ENCODE measurements at regions of chr9 and their contacts with region 1.

Region 1: GRCh38 chr9:95048225-95049087 is 269.1 kb downstream of the FANCC start:
- DNase-seq: peak; percentile 14
- H3K4me3 Mint-ChIP-seq: peak overlapping the region; percentile 68
- H3K27ac Mint-ChIP-seq: peak overlapping the region; percentile 48
- H3K4me1 Mint-ChIP-seq: peaks cover 8% of the 10 kb centered on the region
- H3K27me3 Mint-ChIP-seq: peaks cover 35% of the 10 kb centered on the region

Region 2: GRCh38 chr9:94672811-94673487 is 375.5 kb before region 1 on chr9:
- intact Hi-C with region 1: loop called (anchors 2 kb)
- DNase-seq: no peak
- H3K4me3 Mint-ChIP-seq: no peak overlapping the region
- H3K27ac Mint-ChIP-seq: no peak overlapping the region
- H3K4me1 Mint-ChIP-seq: peaks cover 11% of the 10 kb centered on the region
- H3K27me3 Mint-ChIP-seq: peaks cover 12% of the 10 kb centered on the region

Region 3: GRCh38 chr9:95010431-95010838 is 38.0 kb before region 1 on chr9:
- intact Hi-C with region 1: loop called (anchors 2 kb)
- DNase-seq: no peak
- H3K4me3 Mint-ChIP-seq: no peak overlapping the region
- H3K27ac Mint-ChIP-seq: no peak overlapping the region
- H3K4me1 Mint-ChIP-seq: peaks cover 35% of the 10 kb centered on the region
- H3K27me3 Mint-ChIP-seq: peaks cover 12% of the 10 kb centered on the region

Region 4: DNA sequence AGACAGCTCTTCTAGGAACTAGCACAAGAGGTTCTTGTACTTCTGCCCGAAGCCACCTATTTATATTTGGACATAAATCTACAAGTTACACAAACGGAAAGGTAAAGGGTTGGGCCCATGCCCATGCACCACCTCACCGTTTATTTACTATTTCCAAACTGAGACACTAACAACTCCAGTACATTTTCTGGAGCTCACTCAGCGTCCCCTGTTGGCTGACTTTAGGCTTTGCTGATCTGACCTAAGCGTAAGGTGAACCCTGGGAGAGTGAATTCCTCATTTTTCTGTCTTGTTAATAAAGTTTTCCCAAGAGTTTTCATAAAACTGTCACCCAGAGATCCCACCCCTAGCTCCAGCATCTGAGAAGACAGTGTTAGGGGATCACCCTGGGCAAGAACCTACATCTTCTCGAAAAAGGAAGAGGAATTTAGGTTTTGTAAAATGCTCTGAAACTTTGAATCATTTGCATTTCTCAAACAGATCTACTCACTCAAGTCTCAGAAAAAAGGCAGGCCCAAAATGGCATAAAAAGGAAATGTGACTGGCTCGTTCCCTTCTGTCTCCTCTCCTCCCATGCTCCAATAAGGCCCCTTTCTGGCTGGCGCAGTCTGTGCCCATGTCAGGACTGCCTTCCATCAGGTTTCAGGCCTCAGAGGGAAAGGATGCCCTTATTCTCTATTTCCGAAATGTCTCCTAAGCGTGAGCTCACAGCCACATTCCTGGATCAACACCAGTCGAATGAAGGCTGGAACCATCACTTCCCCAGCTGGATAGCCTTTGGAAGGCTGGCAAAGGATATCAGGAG is 67.7 kb after region 1 on chr9:
- intact Hi-C with region 1: no loop called
- DNase-seq: no peak
- H3K4me3 Mint-ChIP-seq: no peak overlapping the region
- H3K27ac Mint-ChIP-seq: no peak overlapping the region
- H3K4me1 Mint-ChIP-seq: no peaks in the 10 kb centered on the region
- H3K27me3 Mint-ChIP-seq: no peaks in the 10 kb centered on the region

Measured in activated T-helper 1 cell treated with anti-CD3 and anti-CD28 coated beads, Interleukin-12 subunit alpha, Interleukin-12 subunit beta, Interleukin-2, Interleukin-4 antibody, amounts not matched to agents 30 ng/mL and 10 ng/mL and 1 ng/mL, durations not matched to agents 14 hours and 24 hours and 36 hours (primary cell).